Activated CD4-positive, alpha-beta T cell treated with anti-CD3 and anti-CD28 coated beads for 36 hours (primary cell): ENCODE measurements at regions of chr7 and their contacts with region 1.

Region 1: DNA sequence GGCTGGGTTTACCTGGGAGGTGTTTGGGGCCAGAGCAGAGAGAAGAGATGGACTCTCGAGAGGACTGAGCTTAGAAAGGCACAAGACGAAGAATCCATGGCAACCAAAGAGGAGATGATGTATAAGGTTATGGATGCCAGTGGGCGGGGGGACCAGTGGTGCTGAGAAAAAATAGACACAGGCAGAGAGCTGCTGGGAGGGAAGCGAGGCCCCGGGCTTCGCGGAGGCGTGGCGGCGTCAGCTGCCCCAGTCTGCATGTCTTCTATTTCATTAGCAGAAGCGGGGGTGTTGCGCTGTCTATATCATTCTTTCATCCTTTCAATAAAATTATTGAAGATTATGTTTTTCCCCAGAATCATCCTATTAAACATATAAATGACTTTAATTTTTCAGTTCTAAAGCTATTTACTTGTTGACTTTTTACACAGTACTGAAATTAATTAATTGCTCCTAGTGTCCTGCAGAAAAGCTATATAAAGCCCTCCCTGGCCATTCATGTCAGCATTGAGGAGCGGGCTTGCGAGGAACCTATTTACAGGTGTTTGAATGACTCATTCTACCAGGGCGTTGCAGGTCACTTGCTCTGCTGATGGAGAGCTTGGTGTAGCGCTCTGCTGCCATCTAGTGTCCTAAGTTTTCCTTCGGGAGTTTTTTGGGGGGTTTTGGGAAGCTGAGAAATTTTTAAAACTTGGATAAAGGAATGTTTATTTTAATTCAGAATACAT is 42.9 kb upstream of the BHLHA15 start:
- DNase-seq: peak; percentile 68
- ATAC-seq: peak; percentile 68
- H3K4me3 Mint-ChIP-seq: no peak overlapping the region
- H3K27ac Mint-ChIP-seq: no peak overlapping the region
- H3K4me1 Mint-ChIP-seq: peaks cover 5% of the 10 kb centered on the region
- H3K27me3 Mint-ChIP-seq: no peaks in the 10 kb centered on the region

Region 2: DNA sequence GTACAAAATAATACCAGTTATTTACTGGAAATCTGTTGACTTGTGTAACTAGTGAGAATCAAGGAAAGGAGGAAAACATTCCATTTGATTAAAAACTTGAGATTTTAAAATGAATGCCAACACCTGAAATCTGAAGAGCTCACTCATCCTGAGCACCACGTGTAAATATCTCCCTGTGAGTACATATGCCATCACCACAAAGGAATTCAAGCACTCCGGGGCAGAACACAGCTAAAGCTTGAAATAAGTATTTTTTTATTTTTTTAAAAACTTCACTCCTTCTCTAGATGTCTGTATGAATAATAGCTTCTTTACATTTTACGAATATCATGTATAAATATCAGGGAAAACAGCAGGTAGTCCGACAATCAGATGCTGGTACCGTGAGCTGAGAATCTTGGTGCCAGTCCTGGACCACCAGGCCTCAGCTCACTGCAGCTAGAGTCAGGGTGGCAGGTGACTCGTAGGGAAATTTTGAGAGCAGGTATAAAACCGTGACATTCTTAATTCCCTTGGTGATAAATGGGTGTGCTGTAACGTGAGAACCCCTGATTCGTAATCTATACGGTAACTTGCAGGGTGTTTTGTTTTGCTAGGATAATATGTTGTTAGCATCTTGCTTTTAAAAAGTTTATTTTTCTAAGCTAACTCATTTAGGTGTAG is 49.0 kb before region 1 on chr7:
- CTCF ChIA-PET with region 1: interaction called, 12 read pairs
- POLR2A ChIA-PET with region 1: no interaction called
- intact Hi-C with region 1: no loop called
- DNase-seq: no peak
- ATAC-seq: peak; percentile 36
- H3K4me3 Mint-ChIP-seq: no peak overlapping the region
- H3K27ac Mint-ChIP-seq: no peak overlapping the region
- H3K4me1 Mint-ChIP-seq: peaks cover 23% of the 10 kb centered on the region
- H3K27me3 Mint-ChIP-seq: no peaks in the 10 kb centered on the region

Region 3: DNA sequence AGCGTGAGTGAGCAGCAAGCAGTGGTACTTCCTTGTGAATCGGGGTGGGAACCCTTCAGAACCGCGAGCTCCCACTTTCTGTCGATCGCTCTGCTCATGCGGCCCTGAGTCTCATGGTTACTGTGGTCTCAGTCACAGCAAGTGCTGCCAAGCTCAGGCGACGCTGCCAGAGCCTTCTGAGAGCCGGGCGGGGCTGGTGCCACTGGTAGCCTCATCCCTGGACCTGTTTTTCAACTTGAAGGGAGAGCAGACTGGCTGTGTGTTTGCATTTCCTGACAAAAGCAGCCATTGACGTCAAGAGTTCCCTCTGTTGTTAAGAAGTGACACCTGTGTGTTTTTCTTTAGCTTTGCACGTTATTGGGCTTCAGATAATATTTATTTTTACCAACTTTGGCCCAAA is 10.0 kb after region 1 on chr7:
- CTCF ChIA-PET with region 1: interaction called, 28 read pairs
- POLR2A ChIA-PET with region 1: no interaction called
- intact Hi-C with region 1: no loop called
- DNase-seq: no peak
- ATAC-seq: no peak
- H3K4me3 Mint-ChIP-seq: no peak overlapping the region
- H3K27ac Mint-ChIP-seq: no peak overlapping the region
- H3K4me1 Mint-ChIP-seq: no peaks in the 10 kb centered on the region
- H3K27me3 Mint-ChIP-seq: no peaks in the 10 kb centered on the region

Region 4: DNA sequence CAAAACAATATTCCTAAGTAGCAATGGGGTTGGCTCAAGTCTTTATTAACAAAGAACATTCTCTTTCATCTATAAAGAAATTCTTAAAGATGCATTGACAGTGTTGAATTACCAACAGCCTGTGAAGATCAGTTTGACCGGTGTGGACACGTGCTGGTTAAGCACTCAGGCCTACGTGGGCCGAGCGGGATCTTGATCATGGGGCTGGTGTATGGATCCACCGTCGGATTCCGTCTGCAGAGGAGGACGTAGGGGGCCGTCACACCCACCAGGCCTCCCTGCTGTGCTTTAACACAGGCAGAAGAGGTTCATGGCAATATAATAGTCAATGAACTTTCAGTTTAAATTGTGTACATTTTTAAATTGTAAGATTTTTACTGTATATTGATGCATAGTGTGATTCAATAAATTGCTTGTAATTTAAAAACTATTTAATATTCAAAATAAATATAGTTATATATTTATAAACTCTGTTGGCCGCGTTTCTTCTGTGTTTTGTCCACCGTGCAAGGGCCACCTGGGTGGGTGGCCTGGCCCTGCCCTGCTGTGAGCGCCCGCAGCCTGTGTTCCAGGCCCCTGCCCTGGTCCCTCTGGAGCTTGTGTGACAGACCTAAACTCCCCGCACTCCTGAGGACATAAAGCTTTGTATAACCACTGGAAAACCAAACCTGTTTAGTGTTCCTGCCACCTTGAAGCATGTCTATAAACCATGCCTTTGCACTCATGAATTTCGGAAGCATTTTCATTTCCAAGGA is 41.0 kb after region 1 on chr7:
- CTCF ChIA-PET with region 1: no interaction called
- POLR2A ChIA-PET with region 1: no interaction called
- intact Hi-C with region 1: no loop called
- DNase-seq: no peak
- ATAC-seq: no peak
- H3K4me3 Mint-ChIP-seq: peak overlapping the region; percentile 21
- H3K27ac Mint-ChIP-seq: no peak overlapping the region
- H3K4me1 Mint-ChIP-seq: peaks cover 10% of the 10 kb centered on the region
- H3K27me3 Mint-ChIP-seq: no peaks in the 10 kb centered on the region